SK-N-SH (cell line): ENCODE measurements at regions of chr4 and their contacts with region 1.

Region 1: GRCh38 chr4:17324386-17324830 is 187.5 kb downstream of the QDPR start:
- DNase-seq: peak; percentile 59
- H3K4me3 ChIP-seq: peak overlapping the region in 1 of 2 experiments; percentile 46; a peak in 2 of 4 replicates
- H3K27ac ChIP-seq: peak overlapping the region in 1 of 2 experiments; percentile 51; a peak in 1 of 4 replicates
- H3K4me1 ChIP-seq: peaks cover 0 to 10% of the 10 kb centered on the region in 2 experiments; a peak in 2 of 4 replicates
- H3K27me3 ChIP-seq: no peaks in the 10 kb centered on the region
- CTCF ChIP-seq: peak; percentile 88
- EP300 ChIP-seq: no peak
- RAD21 ChIP-seq: peak; percentile 87

Region 2: DNA sequence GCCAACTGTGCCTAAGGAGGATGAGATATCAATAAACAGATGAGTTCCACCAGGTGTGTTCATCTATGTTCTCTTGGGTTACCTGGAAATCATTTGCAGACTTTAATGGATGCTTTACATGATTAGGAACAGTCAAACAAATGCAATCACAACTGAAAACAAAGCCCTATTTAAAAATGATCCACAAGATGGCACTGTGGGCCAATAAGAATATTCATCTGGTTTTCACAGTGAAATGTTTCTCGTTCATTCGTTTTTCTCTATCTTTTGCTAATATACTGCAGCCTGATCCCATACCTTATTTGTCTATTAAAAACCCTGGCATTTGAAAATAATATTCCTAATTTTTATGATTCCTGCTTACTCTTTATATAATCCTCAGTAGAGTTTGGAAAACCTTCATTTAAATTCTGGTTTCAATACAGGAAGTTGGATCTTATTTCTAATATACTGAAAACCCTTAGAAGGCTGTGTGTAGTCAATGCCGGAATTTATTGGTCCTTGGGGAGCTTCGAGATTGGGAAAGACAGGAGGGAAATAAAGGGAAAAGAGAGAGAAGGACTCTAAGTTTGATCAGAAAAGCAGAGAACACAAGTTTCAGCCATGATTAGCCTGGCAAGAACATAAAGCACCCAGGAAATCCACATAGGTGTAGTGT is 1034.4 kb before region 1 on chr4:
- CTCF ChIA-PET with region 1: interaction called, 15 read pairs
- POLR2A ChIA-PET with region 1: no interaction called
- DNase-seq: peak; percentile 51
- H3K4me3 ChIP-seq: peak overlapping the region in 1 of 2 experiments; percentile 26; a peak in 1 of 4 replicates
- H3K27ac ChIP-seq: no peak overlapping the region
- H3K4me1 ChIP-seq: peaks cover 0 to 5% of the 10 kb centered on the region in 2 experiments; a peak in 2 of 4 replicates
- H3K27me3 ChIP-seq: no peaks in the 10 kb centered on the region
- CTCF ChIP-seq: peak; percentile 82
- EP300 ChIP-seq: no peak
- RAD21 ChIP-seq: peak; percentile 81

Region 3: DNA sequence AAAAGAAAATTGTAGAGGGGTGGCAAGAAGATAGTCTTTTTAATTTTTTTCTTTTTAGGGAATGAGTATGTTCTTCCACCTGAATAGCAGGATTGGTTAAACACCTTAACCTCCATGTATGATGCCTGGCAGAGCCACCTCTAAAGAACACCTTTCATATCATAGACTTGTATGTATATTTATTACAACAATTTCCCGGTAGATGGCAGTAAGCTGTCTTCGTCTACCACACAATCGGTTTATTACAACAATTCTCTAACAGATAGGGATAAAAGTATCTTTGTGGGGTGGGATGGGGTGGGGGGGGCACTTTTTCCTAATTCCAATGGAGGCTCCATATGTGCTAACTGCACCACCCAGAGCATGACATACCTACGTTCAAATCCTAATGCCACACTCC is 681.5 kb before region 1 on chr4:
- CTCF ChIA-PET with region 1: interaction called, 36 read pairs
- POLR2A ChIA-PET with region 1: no interaction called
- DNase-seq: peak; percentile 51
- H3K4me3 ChIP-seq: no peak overlapping the region
- H3K27ac ChIP-seq: no peak overlapping the region
- H3K4me1 ChIP-seq: peaks cover 0 to 11% of the 10 kb centered on the region in 2 experiments; a peak in 1 of 4 replicates
- H3K27me3 ChIP-seq: no peaks in the 10 kb centered on the region
- CTCF ChIP-seq: peak; percentile 59
- EP300 ChIP-seq: no peak
- RAD21 ChIP-seq: peak; percentile 75

Region 4: GRCh38 chr4:16916719-16917337 is 407.6 kb before region 1 on chr4:
- CTCF ChIA-PET with region 1: interaction called, 23 read pairs
- POLR2A ChIA-PET with region 1: no interaction called
- DNase-seq: peak; percentile 55
- H3K4me3 ChIP-seq: peak overlapping the region in 1 of 2 experiments; percentile 50; a peak in 1 of 4 replicates
- H3K27ac ChIP-seq: no peak overlapping the region
- H3K4me1 ChIP-seq: no peaks in the 10 kb centered on the region
- H3K27me3 ChIP-seq: no peaks in the 10 kb centered on the region
- CTCF ChIP-seq: peak; percentile 82
- EP300 ChIP-seq: no peak
- RAD21 ChIP-seq: peak; percentile 76

Region 5: DNA sequence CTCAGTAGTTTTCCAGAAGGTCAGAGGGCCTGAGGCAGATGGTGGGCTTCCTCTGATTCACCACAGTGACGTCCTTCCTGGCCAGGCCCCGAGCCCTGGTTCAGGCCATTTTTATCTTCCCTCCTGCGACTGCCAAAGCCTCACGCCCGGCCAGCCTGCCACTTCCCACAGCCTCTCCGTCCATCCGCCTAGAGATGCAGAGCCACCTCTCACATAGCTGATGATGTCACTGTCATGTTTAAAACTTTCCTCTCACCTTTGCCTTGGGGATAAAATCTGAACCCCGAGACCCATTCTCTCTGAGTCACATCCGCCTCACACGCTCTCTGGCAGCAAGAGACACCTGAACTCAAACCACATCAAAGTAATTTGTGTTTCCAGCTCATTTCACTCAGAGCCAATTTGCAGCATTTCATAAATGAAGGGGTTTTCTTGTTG is 12.1 kb after region 1 on chr4:
- CTCF ChIA-PET with region 1: interaction called, 21 read pairs
- POLR2A ChIA-PET with region 1: no interaction called
- DNase-seq: no peak
- H3K4me3 ChIP-seq: no peak overlapping the region
- H3K27ac ChIP-seq: no peak overlapping the region
- H3K4me1 ChIP-seq: no peaks in the 10 kb centered on the region
- H3K27me3 ChIP-seq: no peaks in the 10 kb centered on the region; the same call in 1 of the 2 replicates
- CTCF ChIP-seq: no peak
- EP300 ChIP-seq: no peak
- RAD21 ChIP-seq: no peak

Region 6: GRCh38 chr4:17427991-17428390 is 103.6 kb after region 1 on chr4:
- CTCF ChIA-PET with region 1: no interaction called
- POLR2A ChIA-PET with region 1: no interaction called
- DNase-seq: no peak
- H3K4me3 ChIP-seq: no peak overlapping the region
- H3K27ac ChIP-seq: no peak overlapping the region
- H3K4me1 ChIP-seq: no peaks in the 10 kb centered on the region
- H3K27me3 ChIP-seq: no peaks in the 10 kb centered on the region; the same call in 1 of the 2 replicates
- CTCF ChIP-seq: no peak
- EP300 ChIP-seq: no peak
- RAD21 ChIP-seq: no peak

Region 7: DNA sequence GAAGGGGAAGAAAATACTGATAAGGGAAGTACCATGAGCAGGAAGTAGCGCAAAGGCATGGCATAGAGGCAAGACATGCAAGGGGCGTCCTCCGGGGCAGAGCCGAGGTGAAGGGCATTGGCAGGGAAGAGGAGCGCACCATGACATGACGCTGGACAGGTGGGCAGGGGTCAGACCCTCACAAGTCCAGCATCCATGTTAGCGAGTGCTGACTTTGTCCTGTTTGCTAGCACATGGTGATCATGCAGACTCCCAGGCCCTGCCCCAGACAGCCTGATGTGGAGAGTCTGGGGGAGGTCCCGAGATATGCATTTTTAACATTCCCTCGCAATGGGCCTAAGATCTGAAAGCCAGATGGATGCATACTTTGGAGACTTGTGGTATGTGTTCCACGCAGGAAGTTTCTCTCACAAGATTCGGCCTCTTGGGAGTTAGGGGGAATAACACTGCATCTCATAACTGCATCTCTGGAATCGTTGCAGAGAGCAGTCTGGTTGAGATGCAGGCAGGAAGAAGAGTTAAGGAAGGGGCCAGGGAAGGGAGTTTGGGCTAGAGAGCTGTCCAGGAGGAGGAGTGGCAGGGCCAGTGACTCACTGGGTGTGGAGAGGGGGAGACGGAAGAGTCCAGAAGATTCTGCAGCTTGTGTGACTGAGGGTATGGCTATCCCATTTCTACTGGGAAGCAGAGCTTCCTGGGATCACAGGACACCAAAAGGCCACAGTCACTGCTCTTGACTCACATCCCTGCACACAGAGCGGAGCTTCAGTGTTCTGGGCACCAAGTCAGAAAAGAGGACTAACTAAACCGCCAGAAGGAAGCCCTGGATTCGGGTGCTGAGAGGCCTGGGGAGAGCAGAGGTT is 397.3 kb after region 1 on chr4:
- CTCF ChIA-PET with region 1: no interaction called
- POLR2A ChIA-PET with region 1: no interaction called
- DNase-seq: no peak
- H3K4me3 ChIP-seq: no peak overlapping the region
- H3K27ac ChIP-seq: no peak overlapping the region
- H3K4me1 ChIP-seq: no peaks in the 10 kb centered on the region
- H3K27me3 ChIP-seq: no peaks in the 10 kb centered on the region
- CTCF ChIP-seq: no peak
- EP300 ChIP-seq: no peak
- RAD21 ChIP-seq: no peak